Activated CD4-positive, alpha-beta memory T cell treated with anti-CD3 and anti-CD28 coated beads, Interleukin-2, amount 10 ng/mL, durations not matched to agents 7 days and 5 days (primary cell): ENCODE measurements at regions of chr17 and their contacts with region 1.

Region 1: DNA sequence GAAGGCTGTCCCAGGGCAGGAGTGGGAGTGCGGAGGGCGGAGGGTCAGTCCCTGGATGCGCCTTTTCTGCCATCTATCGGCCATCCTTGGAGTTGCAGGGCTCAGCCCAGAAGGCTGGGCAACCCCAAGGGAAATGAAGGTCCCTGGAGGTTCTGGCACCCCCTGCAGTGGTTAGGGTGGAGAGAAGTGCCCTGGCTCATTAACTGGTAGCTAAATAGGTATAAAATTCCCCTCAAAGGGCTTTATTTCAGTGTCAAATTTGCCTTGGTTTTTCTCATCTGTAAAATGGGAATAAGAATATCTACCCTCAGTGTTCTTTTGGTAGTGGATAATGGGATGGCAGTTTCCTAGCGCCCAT is 22.4 kb downstream of the C17orf75 start:
- DNase-seq: peak; percentile 80
- H3K4me3 Mint-ChIP-seq: peak overlapping the region; percentile 60
- H3K27ac Mint-ChIP-seq: no peak overlapping the region
- H3K4me1 Mint-ChIP-seq: peaks cover 37% of the 10 kb centered on the region
- H3K27me3 Mint-ChIP-seq: peaks cover 11% of the 10 kb centered on the region

Region 2: GRCh38 chr17:32240750-32241149 is 78.8 kb before region 1 on chr17:
- CTCF ChIA-PET with region 1: no interaction called
- POLR2A ChIA-PET with region 1: no interaction called
- DNase-seq: no peak
- H3K4me3 Mint-ChIP-seq: no peak overlapping the region
- H3K27ac Mint-ChIP-seq: no peak overlapping the region
- H3K4me1 Mint-ChIP-seq: no peaks in the 10 kb centered on the region
- H3K27me3 Mint-ChIP-seq: no peaks in the 10 kb centered on the region

Region 3: DNA sequence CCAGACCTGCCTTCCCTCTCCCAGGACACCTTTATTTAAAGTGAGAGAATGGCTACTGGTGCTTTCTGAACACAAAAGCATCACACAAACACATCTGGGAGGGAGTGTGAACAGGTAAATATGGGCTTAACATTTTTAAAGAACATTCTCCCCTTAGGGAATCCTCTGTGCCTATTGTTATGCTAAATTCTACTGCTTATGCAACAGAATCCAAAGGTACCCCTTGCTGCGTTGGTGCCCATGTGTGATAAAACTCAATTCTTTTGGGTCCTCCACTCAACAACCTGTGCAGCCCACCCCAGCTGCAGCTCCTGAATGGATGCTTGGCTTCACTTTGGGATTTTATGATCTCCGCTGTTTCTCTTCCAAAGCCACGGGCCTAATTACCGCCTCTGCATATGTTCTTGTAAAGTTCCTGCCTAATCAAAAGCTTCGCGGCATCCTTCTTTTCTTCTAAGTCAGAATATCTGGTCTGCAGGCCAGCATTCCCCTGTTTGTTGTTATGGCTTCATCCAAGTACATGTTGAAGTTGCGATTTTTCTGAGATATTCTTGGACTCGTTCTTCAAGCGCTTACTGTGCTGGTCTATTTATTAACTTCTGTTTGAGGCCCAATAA is 30.0 kb before region 1 on chr17:
- CTCF ChIA-PET with region 1: no interaction called
- POLR2A ChIA-PET with region 1: no interaction called
- DNase-seq: no peak
- H3K4me3 Mint-ChIP-seq: no peak overlapping the region
- H3K27ac Mint-ChIP-seq: no peak overlapping the region
- H3K4me1 Mint-ChIP-seq: no peaks in the 10 kb centered on the region
- H3K27me3 Mint-ChIP-seq: peaks cover 4% of the 10 kb centered on the region

Region 4: GRCh38 chr17:32307658-32308057 is 11.9 kb before region 1 on chr17:
- CTCF ChIA-PET with region 1: no interaction called
- POLR2A ChIA-PET with region 1: no interaction called
- DNase-seq: no peak
- H3K4me3 Mint-ChIP-seq: no peak overlapping the region
- H3K27ac Mint-ChIP-seq: no peak overlapping the region
- H3K4me1 Mint-ChIP-seq: no peaks in the 10 kb centered on the region
- H3K27me3 Mint-ChIP-seq: peaks cover 5% of the 10 kb centered on the region

Region 5: GRCh38 chr17:32341857-32342602 is 22.5 kb after region 1 on chr17 and contains the start of gene C17orf75:
- CTCF ChIA-PET with region 1: interaction called, 10 read pairs
- POLR2A ChIA-PET with region 1: interaction called, 8 read pairs
- DNase-seq: peak; percentile 82
- H3K4me3 Mint-ChIP-seq: peak within 1 kb of the TSS; percentile 95
- H3K27ac Mint-ChIP-seq: peak within 1 kb of the TSS; percentile 93
- H3K4me1 Mint-ChIP-seq: peaks cover 36% of the 10 kb centered on the region
- H3K27me3 Mint-ChIP-seq: no peaks in the 10 kb centered on the region
- total RNA-seq, gene C17orf75: 32.1 to 35.1 TPM